Gastrocnemius medialis (tissue), 4 donors: ENCODE measurements at regions of chr15 and their contacts with region 1.

Region 1: DNA sequence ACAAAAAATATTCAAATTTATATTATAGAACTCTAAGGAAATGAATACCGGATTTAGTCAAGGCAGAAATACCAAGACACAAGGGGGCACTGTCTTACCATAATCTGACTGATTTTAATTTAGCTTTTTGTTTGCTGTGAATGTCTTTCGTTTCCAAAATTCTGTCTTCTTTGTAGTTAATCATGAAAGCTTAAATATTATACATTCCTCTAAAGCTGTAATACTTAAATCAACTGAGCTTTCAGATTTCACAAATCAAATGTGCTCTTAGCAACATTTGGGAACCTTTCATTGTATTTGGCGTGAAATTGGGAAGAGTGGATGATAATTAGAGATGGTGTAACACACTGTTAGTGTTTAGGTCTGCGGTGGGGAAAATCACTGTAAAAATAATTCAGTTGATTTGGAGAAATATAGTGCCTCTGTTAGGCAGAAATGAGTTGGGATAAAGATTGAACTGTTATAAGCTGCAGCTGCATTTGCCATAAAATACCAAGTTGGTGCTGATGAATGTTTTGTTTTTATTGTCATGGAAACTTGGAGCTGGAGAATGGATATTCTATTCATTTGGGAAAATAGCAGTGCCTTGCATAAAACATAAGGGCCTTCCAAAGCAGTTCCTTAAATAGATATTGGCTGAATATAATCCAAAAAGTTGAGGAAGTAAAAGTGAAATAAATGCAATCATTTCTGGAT is 228.2 kb downstream of the TCF12 start:
- DNase-seq: no peak
- ATAC-seq: peak in 1 of 2 donors; percentile 33
- H3K4me3 ChIP-seq: peak overlapping the region in 3 of 4 donors; percentile 22 to 42 (median 31)
- H3K27ac ChIP-seq: peak overlapping the region in 1 of 4 donors; percentile 2
- H3K4me1 ChIP-seq: peaks cover 37 to 39% of the 10 kb centered on the region in 2 donors
- H3K27me3 ChIP-seq: no peaks in the 10 kb centered on the region
- CTCF ChIP-seq: peak; percentile 51 to 79 (median 62)
- POLR2A ChIP-seq: no peak

Region 2: DNA sequence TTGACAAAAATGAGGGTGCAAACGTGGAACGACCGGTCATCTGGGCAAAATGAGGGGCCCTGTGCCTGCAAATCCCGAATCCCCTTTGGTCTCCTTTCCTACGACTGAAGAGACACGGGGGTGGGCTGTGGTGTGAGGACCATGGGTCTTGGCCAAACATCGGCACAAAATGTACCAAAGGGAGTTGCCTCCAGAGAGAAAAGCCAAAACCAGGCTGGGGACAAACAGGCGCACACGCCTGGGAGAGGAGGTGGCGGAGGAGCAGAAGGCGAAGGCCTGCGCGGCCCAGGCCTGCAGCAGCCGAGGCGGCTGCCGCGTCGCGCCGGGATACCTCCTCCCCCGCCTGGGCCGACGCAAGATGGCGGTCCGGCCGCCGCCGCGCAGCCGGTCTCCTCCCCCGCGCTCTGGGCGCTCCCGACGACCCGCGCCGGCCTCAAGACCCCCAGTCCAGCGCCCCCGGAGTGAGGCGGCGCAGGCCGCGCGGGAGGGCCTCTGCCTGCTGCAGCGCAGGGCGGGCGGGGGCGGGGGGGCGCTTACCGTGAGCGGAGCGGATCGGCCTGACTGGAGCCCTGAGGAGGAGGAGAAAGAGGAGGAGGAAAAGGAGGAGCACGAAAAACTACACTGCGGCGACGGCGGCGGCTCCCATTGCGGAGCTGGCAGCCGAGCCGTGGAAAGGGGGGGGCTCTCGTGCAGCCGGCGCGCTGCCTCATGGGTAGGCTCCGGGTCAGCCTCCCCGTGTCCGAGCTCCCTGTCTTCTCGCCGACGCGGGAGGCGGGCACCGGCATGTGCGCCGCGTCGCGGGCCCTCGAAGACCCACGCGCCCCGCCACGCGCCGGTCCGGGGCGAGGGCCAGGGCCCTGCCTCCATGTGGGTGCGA is 413.5 kb before region 1 on chr15 and contains the start of gene ZNF280D:
- in situ Hi-C with region 1: no loop called
- intact Hi-C with region 1: loop called (anchors 10 kb)
- DNase-seq: peak; percentile 82 to 90
- ATAC-seq: peak; percentile 82 to 88
- H3K4me3 ChIP-seq: peak within 1 kb of the TSS; percentile 65 to 76 (median 67)
- H3K27ac ChIP-seq: peak within 1 kb of the TSS; percentile 86 to 97 (median 92)
- H3K4me1 ChIP-seq: peaks cover 37 to 47% of the 10 kb centered on the region in 2 donors
- H3K27me3 ChIP-seq: no peaks in the 10 kb centered on the region
- CTCF ChIP-seq: peak in 1 of 5 experiments; percentile 8
- POLR2A ChIP-seq: peak; percentile 55 to 65
- total RNA-seq, gene ZNF280D: 19.9 to 45.5 (median 23.4) TPM

Region 3: DNA sequence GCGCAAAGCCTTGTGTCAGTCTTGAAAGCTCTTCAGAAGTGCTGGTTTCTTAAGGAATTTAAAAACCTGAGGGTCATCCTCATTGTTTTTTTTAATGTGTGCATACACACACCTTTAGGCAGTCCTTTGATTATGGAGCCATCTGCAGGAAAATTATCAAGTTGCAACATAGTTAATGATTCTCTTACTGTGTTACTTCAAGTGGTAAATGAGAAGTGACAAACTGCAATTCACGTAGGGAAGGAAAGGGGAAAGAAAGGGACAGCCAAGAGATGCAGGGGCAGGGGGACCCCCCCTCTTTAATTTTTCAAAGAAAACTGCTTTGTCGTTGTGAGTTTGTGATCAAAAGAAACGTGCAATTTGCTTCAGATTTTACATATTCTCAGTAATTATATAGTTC is 67.2 kb after region 1 on chr15:
- in situ Hi-C with region 1: loop called in 2 of 4 experiments (anchors 5 kb)
- intact Hi-C with region 1: loop called (anchors 1 kb)
- DNase-seq: no peak
- ATAC-seq: peak; percentile 66 to 75
- H3K4me3 ChIP-seq: no peak overlapping the region
- H3K27ac ChIP-seq: peak overlapping the region in 3 of 4 donors; percentile 8 to 45 (median 14)
- H3K4me1 ChIP-seq: peaks cover 62 to 72% of the 10 kb centered on the region in 2 donors
- H3K27me3 ChIP-seq: no peaks in the 10 kb centered on the region
- CTCF ChIP-seq: peak; percentile 20 to 64 (median 34)
- POLR2A ChIP-seq: no peak

Region 4: GRCh38 chr15:57316451-57316850 is 169.8 kb after region 1 on chr15:
- in situ Hi-C with region 1: no loop called
- intact Hi-C with region 1: no loop called
- DNase-seq: no peak
- ATAC-seq: no peak
- H3K4me3 ChIP-seq: no peak overlapping the region
- H3K27ac ChIP-seq: no peak overlapping the region
- H3K4me1 ChIP-seq: peaks cover 6 to 7% of the 10 kb centered on the region in 2 donors
- H3K27me3 ChIP-seq: no peaks in the 10 kb centered on the region
- CTCF ChIP-seq: no peak
- POLR2A ChIP-seq: no peak

Region 5: DNA sequence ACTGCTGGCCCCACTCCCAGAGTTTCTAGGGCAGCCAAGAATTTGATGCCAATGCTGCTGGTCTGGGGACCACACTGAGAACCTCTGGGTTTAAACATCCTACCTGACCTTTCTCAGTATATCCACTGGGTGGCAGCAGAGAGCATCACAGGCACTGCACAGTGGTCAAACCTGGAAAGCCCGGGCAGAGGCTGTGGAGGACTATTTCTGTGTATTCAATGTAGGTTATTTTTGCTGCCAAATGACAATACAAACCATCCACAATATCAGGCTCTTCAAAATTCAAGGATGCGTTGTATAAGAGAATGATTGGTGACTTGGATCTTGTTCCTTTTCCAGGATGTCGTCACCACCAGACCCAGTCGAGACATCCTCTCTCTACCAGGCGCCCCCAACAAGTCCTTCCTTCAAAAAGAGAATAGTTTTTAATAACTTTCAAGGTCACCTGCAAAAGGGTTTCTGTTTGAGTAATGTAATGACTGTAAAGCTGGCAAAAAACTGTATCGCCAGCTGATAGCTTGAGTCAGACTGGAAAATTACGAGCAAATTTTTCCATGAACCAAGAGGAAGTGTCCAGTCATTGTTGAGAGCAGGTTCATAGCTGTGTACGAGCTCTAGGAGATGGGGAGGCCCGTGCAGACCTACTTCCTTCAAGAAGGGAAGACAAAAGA is 414.5 kb after region 1 on chr15:
- in situ Hi-C with region 1: no loop called
- intact Hi-C with region 1: no loop called
- DNase-seq: peak; percentile 52 to 70
- ATAC-seq: peak; percentile 87 to 96
- H3K4me3 ChIP-seq: no peak overlapping the region
- H3K27ac ChIP-seq: peak overlapping the region in 3 of 4 donors; percentile 38 to 47 (median 41)
- H3K4me1 ChIP-seq: no peaks in the 10 kb centered on the region
- H3K27me3 ChIP-seq: no peaks in the 10 kb centered on the region
- CTCF ChIP-seq: peak; percentile 85 to 93 (median 90)
- POLR2A ChIP-seq: no peak